SK-N-SH (cell line): ENCODE measurements at regions of chr11 and their contacts with region 1.

Region 1: DNA sequence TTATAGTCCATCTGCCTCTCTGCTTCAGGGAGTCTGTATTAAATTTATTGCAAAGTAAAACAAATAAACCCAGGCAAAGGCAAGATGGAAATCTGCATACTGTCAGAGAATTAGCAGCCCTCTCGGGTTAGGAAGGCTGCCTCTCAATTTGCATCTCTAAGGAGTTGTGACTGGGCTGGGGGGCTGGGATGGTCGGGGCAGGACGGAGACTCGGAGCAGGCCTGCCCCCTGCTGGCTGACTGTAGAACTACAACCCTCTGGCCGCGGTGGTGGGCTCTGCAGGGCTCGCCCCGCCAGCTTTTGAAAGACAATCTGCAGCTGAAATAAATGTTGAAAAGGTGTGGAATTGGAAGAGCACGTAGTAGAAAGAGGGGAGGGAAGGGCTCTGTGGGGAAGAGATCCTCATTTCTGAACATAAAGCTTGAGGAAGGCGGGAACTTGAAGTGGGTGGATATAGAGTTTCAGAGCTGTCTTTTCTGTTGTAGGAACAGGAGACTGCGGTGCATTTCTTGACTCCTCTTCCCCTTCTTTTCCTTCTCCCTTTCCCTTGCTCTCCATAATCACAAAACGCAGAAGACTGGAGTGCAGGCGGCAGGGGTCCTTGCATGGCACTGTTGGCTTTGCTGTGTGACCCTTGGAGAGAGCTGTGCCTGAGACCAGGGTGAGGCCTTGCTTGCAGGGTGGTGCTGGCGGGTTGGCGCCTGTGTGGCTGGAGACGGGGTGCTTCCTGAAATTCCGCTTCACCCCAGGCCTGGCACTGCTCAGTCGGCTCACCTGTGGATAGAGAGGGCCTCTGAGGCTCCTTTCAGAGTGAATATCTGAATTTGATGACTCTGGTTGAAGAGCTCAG is 22.6 kb upstream of the PKNOX2 start:
- DNase-seq: peak; percentile 87
- H3K4me3 ChIP-seq: no peak overlapping the region; a peak in 1 of 4 replicates
- H3K27ac ChIP-seq: no peak overlapping the region
- H3K4me1 ChIP-seq: peaks cover 0 to 13% of the 10 kb centered on the region in 2 experiments; a peak in 1 of 4 replicates
- H3K27me3 ChIP-seq: no peaks in the 10 kb centered on the region
- CTCF ChIP-seq: peak; percentile 97
- EP300 ChIP-seq: no peak
- RAD21 ChIP-seq: peak; percentile 78

Region 2: DNA sequence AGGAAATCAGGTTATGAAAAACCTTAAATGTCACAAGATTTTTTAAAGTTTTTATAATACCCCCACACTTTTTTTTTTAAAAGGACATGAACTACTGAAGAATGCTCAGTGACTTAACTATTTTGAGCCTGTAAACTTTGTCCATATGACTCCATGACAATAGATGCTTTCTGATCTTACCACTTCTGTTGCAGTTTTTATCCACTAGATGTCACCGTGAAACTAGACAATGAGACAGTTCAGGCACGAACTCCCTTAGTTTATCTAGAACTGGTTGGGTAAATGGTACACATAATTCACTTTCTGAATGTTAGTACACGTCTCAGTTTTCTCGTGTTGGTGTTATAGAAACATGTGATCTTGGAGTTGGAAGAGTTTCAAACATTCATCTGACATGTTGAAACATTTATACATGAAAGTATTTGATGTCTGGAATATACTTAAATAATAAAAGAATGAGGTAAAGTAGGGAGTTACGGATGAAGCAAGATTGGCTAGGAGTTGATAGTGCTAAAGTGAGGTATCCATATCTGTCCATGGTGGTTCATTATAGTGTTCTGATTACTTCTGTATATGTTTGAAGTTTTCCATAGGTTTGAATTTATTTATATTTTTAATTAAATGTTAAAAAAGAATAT is 179.8 kb before region 1 on chr11:
- CTCF ChIA-PET with region 1: interaction called, 21 read pairs
- POLR2A ChIA-PET with region 1: no interaction called
- DNase-seq: peak; percentile 60
- H3K4me3 ChIP-seq: no peak overlapping the region
- H3K27ac ChIP-seq: no peak overlapping the region
- H3K4me1 ChIP-seq: no peaks in the 10 kb centered on the region
- H3K27me3 ChIP-seq: no peaks in the 10 kb centered on the region
- CTCF ChIP-seq: peak; percentile 84
- EP300 ChIP-seq: no peak
- RAD21 ChIP-seq: peak; percentile 94

Region 3: GRCh38 chr11:125075849-125076317 is 66.0 kb before region 1 on chr11:
- CTCF ChIA-PET with region 1: interaction called, 12 read pairs
- POLR2A ChIA-PET with region 1: no interaction called
- DNase-seq: no peak
- H3K4me3 ChIP-seq: no peak overlapping the region
- H3K27ac ChIP-seq: no peak overlapping the region
- H3K4me1 ChIP-seq: no peaks in the 10 kb centered on the region; a peak in 1 of 4 replicates
- H3K27me3 ChIP-seq: no peaks in the 10 kb centered on the region
- CTCF ChIP-seq: no peak
- EP300 ChIP-seq: no peak
- RAD21 ChIP-seq: no peak

Region 4: GRCh38 chr11:125102510-125102909 is 39.4 kb before region 1 on chr11:
- CTCF ChIA-PET with region 1: interaction called, 147 read pairs
- POLR2A ChIA-PET with region 1: no interaction called
- DNase-seq: no peak
- H3K4me3 ChIP-seq: no peak overlapping the region
- H3K27ac ChIP-seq: no peak overlapping the region
- H3K4me1 ChIP-seq: no peaks in the 10 kb centered on the region
- H3K27me3 ChIP-seq: no peaks in the 10 kb centered on the region
- CTCF ChIP-seq: no peak
- EP300 ChIP-seq: no peak
- RAD21 ChIP-seq: no peak

Region 5: DNA sequence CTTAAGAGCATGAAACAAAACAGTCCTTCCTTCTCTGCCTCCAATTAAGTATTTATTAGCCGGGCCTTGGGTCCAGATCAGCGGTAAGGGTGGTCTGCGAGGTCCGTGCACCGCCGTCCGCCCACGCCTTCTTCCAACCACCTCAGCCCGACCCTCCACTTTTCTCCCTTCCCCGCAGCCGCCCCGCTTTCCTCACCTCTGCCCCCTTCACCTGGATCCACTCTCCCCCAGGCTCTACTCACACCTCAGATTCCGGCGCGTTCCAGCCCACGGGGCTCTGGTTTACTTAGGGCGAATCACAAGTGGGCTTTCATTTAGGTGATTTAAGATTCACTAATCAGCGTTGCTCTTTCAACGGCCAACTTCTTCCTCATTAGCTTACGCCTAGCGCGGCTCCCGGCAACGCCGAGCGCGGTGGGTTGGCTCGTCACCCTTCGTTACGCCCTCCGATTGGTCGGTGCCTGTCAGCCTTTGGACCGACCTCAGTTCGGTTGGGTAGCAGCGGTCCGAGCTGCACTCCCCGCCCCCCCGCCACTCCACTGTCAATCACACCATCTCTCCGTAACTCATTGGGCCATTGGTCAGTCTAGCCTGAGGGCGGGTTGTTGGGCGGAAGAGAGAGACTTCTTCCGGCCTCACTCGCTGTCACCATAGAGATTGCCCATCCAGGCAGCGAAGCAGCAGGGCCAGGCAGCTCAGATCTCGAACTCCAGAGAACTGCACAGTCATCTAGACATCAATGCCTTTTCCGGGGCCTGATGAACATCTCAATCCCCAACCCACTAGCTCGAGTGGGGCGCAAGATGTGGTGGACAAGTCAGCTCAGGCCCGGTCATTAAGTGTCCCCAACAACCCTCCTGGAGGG is 30.3 kb before region 1 on chr11 and contains the start of gene TMEM218:
- CTCF ChIA-PET with region 1: interaction called, 44 read pairs
- POLR2A ChIA-PET with region 1: interaction called, 5 read pairs
- DNase-seq: peak; percentile 93
- H3K4me3 ChIP-seq: peak within 1 kb of the TSS; percentile 79 to 100
- H3K27ac ChIP-seq: peak within 1 kb of the TSS; percentile 46 to 84; a peak in 3 of 4 replicates
- H3K4me1 ChIP-seq: peaks cover 5 to 8% of the 10 kb centered on the region in 2 experiments; a peak in 3 of 4 replicates
- H3K27me3 ChIP-seq: no peaks in the 10 kb centered on the region
- CTCF ChIP-seq: no peak
- EP300 ChIP-seq: no peak
- RAD21 ChIP-seq: no peak
- polyA plus RNA-seq, gene TMEM218: 34.8 and 36.2 TPM in 2 replicates

Region 6: GRCh38 chr11:125123947-125124617 is 17.8 kb before region 1 on chr11:
- CTCF ChIA-PET with region 1: interaction called, 13 read pairs
- POLR2A ChIA-PET with region 1: no interaction called
- DNase-seq: peak; percentile 42
- H3K4me3 ChIP-seq: no peak overlapping the region
- H3K27ac ChIP-seq: no peak overlapping the region
- H3K4me1 ChIP-seq: no peaks in the 10 kb centered on the region
- H3K27me3 ChIP-seq: no peaks in the 10 kb centered on the region
- CTCF ChIP-seq: peak; percentile 48
- EP300 ChIP-seq: no peak
- RAD21 ChIP-seq: 0 out of 2 replicates have a peak, but pooled peaks have one; percentile 8

Region 7: GRCh38 chr11:125154378-125155099 is 12.6 kb after region 1 on chr11:
- CTCF ChIA-PET with region 1: interaction called, 44 read pairs
- POLR2A ChIA-PET with region 1: no interaction called
- DNase-seq: no peak
- H3K4me3 ChIP-seq: no peak overlapping the region
- H3K27ac ChIP-seq: no peak overlapping the region
- H3K4me1 ChIP-seq: peaks cover 0 to 8% of the 10 kb centered on the region in 2 experiments; a peak in 1 of 4 replicates
- H3K27me3 ChIP-seq: peaks cover 11% of the 10 kb centered on the region; the same call in 1 of the 2 replicates
- CTCF ChIP-seq: no peak
- EP300 ChIP-seq: no peak
- RAD21 ChIP-seq: no peak

Region 8: DNA sequence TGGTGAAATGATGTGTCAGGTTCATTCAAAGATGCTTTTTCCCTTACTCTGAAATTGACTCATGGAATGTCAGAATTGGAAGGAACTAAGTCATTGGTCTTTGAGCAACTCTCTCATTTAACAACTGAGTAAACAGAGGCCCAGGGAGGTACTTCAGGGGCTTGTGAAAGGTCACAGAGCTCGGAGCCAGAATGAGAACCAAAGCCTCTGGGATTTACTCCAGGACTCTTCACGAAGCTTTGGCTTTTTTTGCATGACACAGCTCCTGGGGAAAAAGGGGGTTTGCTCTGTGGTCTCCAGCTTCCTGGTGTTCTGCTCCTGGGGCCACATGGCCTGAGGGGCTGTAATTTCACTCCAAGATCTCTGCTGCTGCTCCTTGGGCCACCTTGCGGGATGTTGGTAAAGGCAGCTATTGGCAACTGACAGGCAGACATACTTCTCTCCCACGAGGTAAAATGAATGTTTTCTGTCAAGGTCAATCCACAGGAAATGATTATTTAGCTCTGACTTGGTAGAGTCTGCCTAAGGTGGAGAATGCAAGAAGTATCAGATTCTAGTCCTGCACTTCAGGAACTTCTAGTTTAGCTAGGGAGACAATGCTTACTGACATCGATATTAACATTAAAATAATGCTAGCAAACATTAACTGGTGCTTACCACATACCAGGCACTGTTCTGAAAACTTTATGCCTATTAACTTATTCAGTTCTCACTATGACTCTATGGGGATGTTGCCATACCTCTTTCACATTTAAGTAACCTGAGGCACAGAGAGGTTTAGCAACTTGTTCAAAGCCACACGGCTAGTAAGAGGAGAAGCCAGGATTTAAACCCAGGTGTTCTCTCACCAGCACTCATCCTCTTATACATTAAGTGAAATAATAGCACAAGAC is 38.7 kb after region 1 on chr11:
- CTCF ChIA-PET with region 1: no interaction called
- POLR2A ChIA-PET with region 1: no interaction called
- DNase-seq: no peak
- H3K4me3 ChIP-seq: no peak overlapping the region
- H3K27ac ChIP-seq: no peak overlapping the region
- H3K4me1 ChIP-seq: no peaks in the 10 kb centered on the region
- H3K27me3 ChIP-seq: no peaks in the 10 kb centered on the region
- CTCF ChIP-seq: no peak
- EP300 ChIP-seq: no peak
- RAD21 ChIP-seq: no peak

Region 9: DNA sequence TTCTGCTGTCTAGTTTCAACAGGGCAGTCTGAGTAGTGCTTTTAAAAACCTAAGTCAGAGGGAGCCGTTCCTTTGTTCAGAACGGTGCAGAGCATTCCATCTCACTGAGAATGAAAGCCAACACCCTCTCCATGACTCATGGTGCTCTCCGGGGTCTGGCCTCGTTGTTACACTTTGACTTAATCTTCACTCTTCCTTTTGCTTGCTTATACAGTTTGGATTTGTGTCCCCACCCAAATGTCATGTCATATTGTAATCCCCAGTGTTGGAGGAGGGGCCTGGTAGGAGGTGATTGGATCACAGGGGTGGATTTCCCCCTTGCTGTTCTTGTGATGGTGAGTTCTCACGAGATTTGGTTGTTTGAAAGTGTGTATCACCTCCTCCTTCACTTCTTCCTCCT is 1505.8 kb after region 1 on chr11:
- CTCF ChIA-PET with region 1: no interaction called
- POLR2A ChIA-PET with region 1: no interaction called
- DNase-seq: no peak
- H3K4me3 ChIP-seq: peak overlapping the region in 1 of 2 experiments; percentile 26; a peak in 2 of 4 replicates
- H3K27ac ChIP-seq: peak overlapping the region; percentile 14 to 86; a peak in 3 of 4 replicates
- H3K4me1 ChIP-seq: peaks cover 0 to 21% of the 10 kb centered on the region in 2 experiments; a peak in 2 of 4 replicates
- H3K27me3 ChIP-seq: no peaks in the 10 kb centered on the region
- CTCF ChIP-seq: no peak
- EP300 ChIP-seq: no peak; a peak in 1 of 4 replicates
- RAD21 ChIP-seq: no peak